ENCODE measurements at regions of chr14 and their contacts with region 1.

Region 1: DNA sequence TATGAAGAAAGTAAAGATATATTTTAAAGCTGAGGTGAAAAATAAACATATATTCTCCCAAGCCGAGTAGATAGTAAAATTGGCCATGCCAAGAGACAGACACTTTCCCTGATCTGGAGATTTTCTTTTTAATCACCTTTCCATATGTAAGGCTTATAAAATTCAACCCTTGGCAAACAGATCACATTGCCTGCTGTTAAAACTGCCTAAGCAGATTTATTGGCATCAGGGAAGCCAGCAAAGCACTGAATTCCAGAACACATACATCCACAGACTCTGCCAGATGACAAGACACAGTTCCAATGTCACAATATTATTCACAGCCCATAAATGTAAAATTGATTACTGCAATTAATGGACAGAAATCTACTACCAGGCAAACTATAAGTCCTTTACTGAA is 78.2 kb upstream of the GARIN2 start:
- DNase-seq: no peak
- H3K4me3 ChIP-seq: no peak overlapping the region
- H3K4me1 ChIP-seq: no peaks in the 10 kb centered on the region
- H3K27me3 ChIP-seq: no peaks in the 10 kb centered on the region

Region 2: GRCh38 chr14:66359500-66359899 is 751.5 kb before region 1 on chr14:
- in situ Hi-C with region 1: loop called (anchors 25 kb)
- DNase-seq: peak; percentile 32 to 42
- H3K4me3 ChIP-seq: no peak overlapping the region
- H3K4me1 ChIP-seq: no peaks in the 10 kb centered on the region
- H3K27me3 ChIP-seq: peaks cover 10% of the 10 kb centered on the region

Measured in HAP-1 (cell line).